Mammary epithelial cell (primary cell): ENCODE measurements at regions of chr2 and their contacts with region 1.

Region 1: DNA sequence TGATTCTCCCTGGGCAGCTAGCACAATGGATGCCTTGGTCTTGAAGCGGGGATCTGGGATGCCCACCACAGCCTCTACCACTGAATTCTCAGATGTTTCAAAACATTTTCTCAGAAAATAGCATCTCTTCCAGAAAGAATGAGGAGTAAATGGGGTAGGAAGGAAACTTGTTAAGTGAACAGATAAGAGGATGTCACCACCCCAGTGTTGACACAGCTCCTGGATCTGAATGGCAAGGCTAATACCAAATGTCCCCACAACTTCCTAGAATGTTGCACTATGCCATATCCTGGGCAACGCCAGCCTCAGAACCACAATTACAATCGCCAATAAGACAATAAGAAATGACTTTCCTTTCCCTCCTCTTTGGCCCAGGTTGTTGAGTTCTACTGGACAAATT is 177.2 kb downstream of the BCL11A start:
- DNase-seq: no peak
- H3K4me3 ChIP-seq: no peak overlapping the region
- H3K27ac ChIP-seq: no peak overlapping the region
- H3K4me1 ChIP-seq: no peaks in the 10 kb centered on the region
- H3K27me3 ChIP-seq: peaks cover 4% of the 10 kb centered on the region
- CTCF ChIP-seq: no peak

Region 2: DNA sequence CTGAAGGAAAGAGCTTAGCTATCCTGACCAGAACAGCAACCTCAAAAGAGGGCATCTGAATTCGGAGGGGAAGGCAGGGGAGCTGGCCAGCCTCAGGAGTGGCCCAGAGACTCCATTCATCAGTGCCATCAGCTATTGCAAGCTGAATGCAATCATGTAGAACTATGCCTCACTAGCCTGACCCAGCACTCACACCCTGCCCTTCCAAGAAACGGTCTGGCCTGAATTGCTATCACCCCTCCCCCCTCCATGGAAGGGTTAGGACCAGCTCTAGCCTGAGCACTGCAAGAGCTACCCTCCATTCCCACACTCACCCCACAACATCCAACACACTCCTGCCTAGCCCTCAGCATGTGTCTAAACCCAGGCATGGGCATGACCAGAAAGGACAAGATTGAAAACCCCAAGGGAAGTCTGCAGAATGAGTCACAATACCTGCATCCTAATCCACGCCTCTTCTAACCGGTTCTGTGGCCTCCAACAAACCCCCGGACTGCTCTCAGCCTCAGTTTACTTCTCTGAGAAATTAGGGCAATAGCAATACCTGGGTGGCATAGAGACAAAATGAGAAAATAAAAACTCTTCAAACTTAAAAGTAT is 56.9 kb after region 1 on chr2:
- CTCF ChIA-PET with region 1: no interaction called
- dilution Hi-C with region 1: no loop called
- in situ Hi-C with region 1: no loop called
- intact Hi-C with region 1: no loop called
- DNase-seq: peak; percentile 58
- H3K4me3 ChIP-seq: no peak overlapping the region
- H3K27ac ChIP-seq: no peak overlapping the region
- H3K4me1 ChIP-seq: peaks cover 7% of the 10 kb centered on the region
- H3K27me3 ChIP-seq: no peaks in the 10 kb centered on the region
- CTCF ChIP-seq: no peak

Region 3: GRCh38 chr2:60446413-60447267 is 70.4 kb after region 1 on chr2:
- CTCF ChIA-PET with region 1: no interaction called
- dilution Hi-C with region 1: loop called (anchors 5 kb)
- in situ Hi-C with region 1: no loop called
- intact Hi-C with region 1: no loop called
- DNase-seq: no peak
- H3K4me3 ChIP-seq: no peak overlapping the region
- H3K27ac ChIP-seq: no peak overlapping the region
- H3K4me1 ChIP-seq: peaks cover 4% of the 10 kb centered on the region
- H3K27me3 ChIP-seq: no peaks in the 10 kb centered on the region
- CTCF ChIP-seq: no peak